Cardiac septum (tissue), 1 donor: ENCODE measurements at regions of chr3 and their contacts with region 1.

Region 1: GRCh38 chr3:72447059-72447946 is 400.9 kb downstream of the SHQ1 start:
- DNase-seq: peak; percentile 96

Region 2: GRCh38 chr3:71942432-71943187 is 504.7 kb before region 1 on chr3:
- intact Hi-C with region 1: no loop called
- DNase-seq: no peak

Region 3: GRCh38 chr3:72152551-72153476 is 294.5 kb before region 1 on chr3:
- intact Hi-C with region 1: loop called (anchors 10 kb)
- DNase-seq: no peak

Region 4: GRCh38 chr3:72299321-72299802 is 147.9 kb before region 1 on chr3:
- intact Hi-C with region 1: no loop called
- DNase-seq: no peak

Region 5: DNA sequence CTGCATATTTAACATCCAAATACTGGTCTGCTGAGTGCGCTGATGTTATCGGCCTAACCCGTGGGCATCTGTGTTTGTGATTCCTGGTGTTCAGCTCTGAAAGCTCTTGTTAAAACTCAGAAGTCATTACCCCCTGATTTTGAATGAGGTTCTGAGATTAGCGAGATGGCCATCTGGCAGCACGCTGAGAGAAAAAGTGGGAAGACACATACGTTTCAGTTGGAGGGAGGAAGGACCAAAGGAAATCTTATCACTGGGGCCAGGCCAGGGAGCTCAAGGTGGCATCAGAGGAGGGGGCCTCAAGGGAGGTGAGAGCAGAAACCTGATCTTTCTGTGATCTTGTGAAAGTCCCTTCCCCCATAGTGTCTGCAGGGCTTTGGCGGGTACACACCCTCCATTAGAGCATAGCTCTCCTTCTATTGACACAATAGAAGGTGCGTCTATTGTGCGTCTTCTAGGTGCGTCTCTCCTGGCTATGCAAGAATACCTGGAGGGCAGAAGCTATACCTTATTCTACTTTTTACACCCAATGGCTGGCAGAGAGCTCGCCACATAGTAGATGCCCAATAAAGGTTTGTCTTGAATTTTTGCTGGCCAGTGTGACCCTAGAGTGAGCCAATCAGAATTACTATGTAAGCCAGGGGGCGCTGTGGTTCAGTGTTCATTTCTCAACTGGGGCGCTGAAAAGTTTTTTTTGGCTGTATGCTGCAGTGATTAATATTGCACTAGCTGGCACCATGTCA is 218.6 kb after region 1 on chr3:
- intact Hi-C with region 1: loop called (anchors 10 kb)
- DNase-seq: no peak

Region 6: GRCh38 chr3:72694398-72694797 is 247.1 kb after region 1 on chr3:
- intact Hi-C with region 1: no loop called
- DNase-seq: no peak